ENCODE measurements at regions of chr9 and their contacts with region 1.

Region 1: GRCh38 chr9:35116898-35117551 is 1.4 kb upstream of the ATOSB start:
- DNase-seq: no peak
- ATAC-seq: peak; percentile 79
- H3K4me3 ChIP-seq: no peak overlapping the region
- H3K27ac ChIP-seq: no peak overlapping the region
- H3K4me1 ChIP-seq: peaks cover 24% of the 10 kb centered on the region
- H3K27me3 ChIP-seq: no peaks in the 10 kb centered on the region
- CTCF ChIP-seq: peak; percentile 93 to 98 (median 95); a peak in 5 of 6 replicates
- EP300 ChIP-seq: no peak
- POLR2A ChIP-seq: no peak
- RAD21 ChIP-seq: peak; percentile 92

Region 2: DNA sequence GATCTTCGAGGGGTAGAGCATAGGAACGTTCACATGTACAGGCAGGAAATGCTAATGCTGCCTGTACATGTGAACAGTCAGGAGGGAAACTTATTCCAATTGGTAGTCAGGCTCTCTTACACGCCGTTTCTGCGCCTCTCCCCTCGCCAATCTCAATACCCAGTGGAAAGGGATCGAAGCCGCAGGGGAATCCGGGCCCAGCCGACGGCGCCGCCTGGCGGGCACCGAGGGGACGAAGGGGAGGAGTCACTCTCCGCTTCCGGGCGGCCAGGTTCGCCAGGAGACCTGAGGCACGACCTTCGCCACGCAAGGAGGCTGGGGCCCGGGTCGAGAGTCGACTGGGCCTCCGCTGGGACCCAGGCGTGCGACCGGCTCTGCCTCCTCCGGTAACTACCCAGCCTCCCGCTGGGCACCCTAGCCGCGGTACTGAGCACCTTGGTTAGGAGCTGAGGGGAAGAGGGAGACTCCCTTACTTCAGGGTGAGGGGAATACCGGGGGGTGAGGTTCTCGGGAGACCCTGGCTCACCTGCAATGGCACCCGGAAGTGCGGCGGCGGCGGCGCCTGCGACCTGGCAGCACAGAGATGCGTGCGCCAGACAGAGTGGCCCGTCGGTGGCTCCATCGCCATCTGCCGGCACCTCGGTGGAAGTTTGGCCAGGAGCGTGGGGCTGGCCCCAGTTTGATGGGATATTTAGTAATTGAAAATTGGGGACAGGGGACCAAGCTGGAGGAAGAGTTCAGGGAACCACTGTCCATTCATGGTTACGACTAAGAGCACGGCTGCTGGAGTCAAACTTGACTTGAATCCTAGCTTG is 20.8 kb before region 1 on chr9 and contains the start of gene PIGO:
- CTCF ChIA-PET with region 1: interaction called, 8 read pairs
- POLR2A ChIA-PET with region 1: interaction called, 5 read pairs
- RAD21 ChIA-PET with region 1: interaction called, 5 read pairs
- SMC1A ChIA-PET with region 1: interaction called, 5 read pairs
- in situ Hi-C with region 1: no loop called
- intact Hi-C with region 1: loop called (anchors 2 kb)
- DNase-seq: no peak
- ATAC-seq: peak; percentile 95
- H3K4me3 ChIP-seq: peak within 1 kb of the TSS; percentile 81
- H3K27ac ChIP-seq: peak within 1 kb of the TSS; percentile 100
- H3K4me1 ChIP-seq: peaks cover 7% of the 10 kb centered on the region
- H3K27me3 ChIP-seq: no peaks in the 10 kb centered on the region
- CTCF ChIP-seq: peak; percentile 87 to 98 (median 96)
- EP300 ChIP-seq: no peak
- POLR2A ChIP-seq: peak; percentile 98
- RAD21 ChIP-seq: peak; percentile 69
- polyA plus RNA-seq, gene PIGO: 8.3 to 13.1 TPM

Region 3: GRCh38 chr9:35102926-35103659 is 13.9 kb before region 1 on chr9 and contains the start of gene STOML2:
- CTCF ChIA-PET with region 1: interaction called, 5 read pairs
- POLR2A ChIA-PET with region 1: interaction called, 27 read pairs
- RAD21 ChIA-PET with region 1: interaction called, 6 read pairs
- SMC1A ChIA-PET with region 1: interaction called, 5 read pairs
- in situ Hi-C with region 1: no loop called
- intact Hi-C with region 1: no loop called
- DNase-seq: peak; percentile 78
- ATAC-seq: peak; percentile 99
- H3K4me3 ChIP-seq: peak within 1 kb of the TSS; percentile 79
- H3K27ac ChIP-seq: peak within 1 kb of the TSS; percentile 88
- H3K4me1 ChIP-seq: peaks cover 5% of the 10 kb centered on the region
- H3K27me3 ChIP-seq: no peaks in the 10 kb centered on the region
- CTCF ChIP-seq: no peak
- EP300 ChIP-seq: peak in 1 of 2 experiments; percentile 73; a peak in 2 of 4 replicates
- POLR2A ChIP-seq: peak; percentile 88
- RAD21 ChIP-seq: no peak
- polyA plus RNA-seq, gene STOML2: 112 to 148 TPM

Region 4: GRCh38 chr9:35258676-35259474 is 141.8 kb after region 1 on chr9:
- CTCF ChIA-PET with region 1: interaction called, 85 read pairs
- POLR2A ChIA-PET with region 1: interaction called, 3 read pairs
- RAD21 ChIA-PET with region 1: interaction called, 20 read pairs
- SMC1A ChIA-PET with region 1: interaction called, 23 read pairs
- in situ Hi-C with region 1: loop called (anchors 5 kb)
- intact Hi-C with region 1: loop called (anchors 1 kb)
- DNase-seq: no peak
- ATAC-seq: peak; percentile 71
- H3K4me3 ChIP-seq: no peak overlapping the region
- H3K27ac ChIP-seq: no peak overlapping the region
- H3K4me1 ChIP-seq: no peaks in the 10 kb centered on the region
- H3K27me3 ChIP-seq: no peaks in the 10 kb centered on the region
- CTCF ChIP-seq: peak; percentile 60 to 63 (median 63)
- EP300 ChIP-seq: no peak
- POLR2A ChIP-seq: no peak
- RAD21 ChIP-seq: peak; percentile 67

Region 5: GRCh38 chr9:35481347-35481975 is 364.4 kb after region 1 on chr9:
- CTCF ChIA-PET with region 1: interaction called, 15 read pairs
- POLR2A ChIA-PET with region 1: no interaction called
- RAD21 ChIA-PET with region 1: interaction called, 20 read pairs
- SMC1A ChIA-PET with region 1: no interaction called
- in situ Hi-C with region 1: loop called (anchors 5 kb)
- intact Hi-C with region 1: loop called (anchors 1 kb)
- DNase-seq: no peak
- ATAC-seq: peak; percentile 75
- H3K4me3 ChIP-seq: no peak overlapping the region
- H3K27ac ChIP-seq: no peak overlapping the region
- H3K4me1 ChIP-seq: no peaks in the 10 kb centered on the region
- H3K27me3 ChIP-seq: no peaks in the 10 kb centered on the region
- CTCF ChIP-seq: peak; percentile 57 to 69 (median 64); a peak in 5 of 6 replicates
- EP300 ChIP-seq: no peak
- POLR2A ChIP-seq: no peak
- RAD21 ChIP-seq: peak; percentile 72

Region 6: GRCh38 chr9:35553670-35554543 is 436.9 kb after region 1 on chr9:
- CTCF ChIA-PET with region 1: interaction called, 40 read pairs
- POLR2A ChIA-PET with region 1: no interaction called
- RAD21 ChIA-PET with region 1: interaction called, 13 read pairs
- SMC1A ChIA-PET with region 1: interaction called, 4 read pairs
- in situ Hi-C with region 1: no loop called
- intact Hi-C with region 1: loop called (anchors 1 kb)
- DNase-seq: peak; percentile 8
- ATAC-seq: peak; percentile 82
- H3K4me3 ChIP-seq: no peak overlapping the region
- H3K27ac ChIP-seq: no peak overlapping the region
- H3K4me1 ChIP-seq: no peaks in the 10 kb centered on the region
- H3K27me3 ChIP-seq: no peaks in the 10 kb centered on the region
- CTCF ChIP-seq: peak; percentile 64 to 80 (median 74)
- EP300 ChIP-seq: no peak
- POLR2A ChIP-seq: no peak
- RAD21 ChIP-seq: peak; percentile 83

Region 7: DNA sequence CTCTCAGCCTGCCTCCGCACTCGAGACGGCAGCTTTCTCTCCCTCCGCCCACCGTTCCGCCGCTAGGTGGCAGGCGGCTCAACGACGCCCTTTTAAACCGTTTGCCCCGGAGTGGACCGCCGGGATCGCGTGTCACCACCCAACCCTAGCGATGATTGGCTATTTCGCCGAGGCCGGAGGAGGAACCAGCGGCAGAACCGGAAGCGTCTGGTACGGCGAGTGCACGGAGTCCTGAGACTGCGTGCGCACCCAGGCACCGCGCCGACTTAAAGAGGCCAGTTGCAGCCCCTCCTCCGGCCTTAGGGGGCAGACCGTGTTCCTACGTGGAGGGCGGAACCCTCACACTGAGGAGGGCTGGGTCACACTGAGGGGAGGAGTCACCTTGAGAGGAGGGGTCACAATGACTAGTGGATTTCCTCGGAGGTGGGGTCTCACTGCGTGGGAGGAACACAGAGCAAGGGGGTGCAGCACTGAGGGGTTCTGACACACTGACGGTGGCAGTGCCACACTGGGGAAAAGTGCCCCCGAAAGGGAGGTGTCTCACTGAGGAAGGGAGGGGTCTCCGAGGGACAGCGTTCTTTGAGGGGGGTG is 487.1 kb after region 1 on chr9:
- CTCF ChIA-PET with region 1: interaction called, 5 read pairs
- POLR2A ChIA-PET with region 1: interaction called, 3 read pairs
- RAD21 ChIA-PET with region 1: no interaction called
- SMC1A ChIA-PET with region 1: no interaction called
- in situ Hi-C with region 1: loop called (anchors 5 kb)
- intact Hi-C with region 1: loop called (anchors 10 kb)
- DNase-seq: peak; percentile 98
- ATAC-seq: peak; percentile 97
- H3K4me3 ChIP-seq: peak overlapping the region; percentile 77
- H3K27ac ChIP-seq: peak overlapping the region; percentile 73
- H3K4me1 ChIP-seq: peaks cover 8% of the 10 kb centered on the region
- H3K27me3 ChIP-seq: no peaks in the 10 kb centered on the region
- CTCF ChIP-seq: peak; percentile 81 to 98 (median 90)
- EP300 ChIP-seq: no peak
- POLR2A ChIP-seq: peak; percentile 81
- RAD21 ChIP-seq: peak; percentile 76

Measured in GM12878 (cell line).